MCF 10A (cell line): ENCODE measurements at regions of chr10 and their contacts with region 1.

Region 1: GRCh38 chr10:78255796-78256638 is 222.4 kb downstream of the RPS24 start:
- DNase-seq: peak; percentile 91
- H3K4me3 Mint-ChIP-seq: no peak overlapping the region
- H3K27ac Mint-ChIP-seq: peak overlapping the region; percentile 20
- H3K4me1 Mint-ChIP-seq: peaks cover 7% of the 10 kb centered on the region
- H3K27me3 Mint-ChIP-seq: no peaks in the 10 kb centered on the region
- CTCF ChIP-seq: no peak

Region 2: GRCh38 chr10:78302989-78303854 is 47.2 kb after region 1 on chr10:
- CTCF ChIA-PET with region 1: no interaction called
- POLR2A ChIA-PET with region 1: interaction called, 3 read pairs
- intact Hi-C with region 1: loop called (anchors 2 kb)
- DNase-seq: peak; percentile 91
- H3K4me3 Mint-ChIP-seq: peak overlapping the region; percentile 90
- H3K27ac Mint-ChIP-seq: peak overlapping the region; percentile 75
- H3K4me1 Mint-ChIP-seq: no peaks in the 10 kb centered on the region
- H3K27me3 Mint-ChIP-seq: peaks cover 33% of the 10 kb centered on the region
- CTCF ChIP-seq: peak; percentile 43